ENCODE measurements at regions of chr12 and their contacts with region 1.

Region 1: GRCh38 chr12:47715393-47715876 is 9.6 kb upstream of the RPAP3 start:
- DNase-seq: peak; percentile 24
- H3K4me3 ChIP-seq: no peak overlapping the region
- CTCF ChIP-seq: peak; percentile 61

Region 2: GRCh38 chr12:47742253-47742825 is 26.9 kb after region 1 on chr12:
- CTCF ChIA-PET with region 1: interaction called, 247 read pairs
- POLR2A ChIA-PET with region 1: no interaction called
- DNase-seq: no peak
- H3K4me3 ChIP-seq: no peak overlapping the region
- CTCF ChIP-seq: peak; percentile 97

Region 3: GRCh38 chr12:47779301-47779942 is 64.0 kb after region 1 on chr12:
- CTCF ChIA-PET with region 1: interaction called, 1,419 read pairs
- POLR2A ChIA-PET with region 1: no interaction called
- DNase-seq: peak; percentile 34
- H3K4me3 ChIP-seq: no peak overlapping the region
- CTCF ChIP-seq: peak; percentile 86

Region 4: DNA sequence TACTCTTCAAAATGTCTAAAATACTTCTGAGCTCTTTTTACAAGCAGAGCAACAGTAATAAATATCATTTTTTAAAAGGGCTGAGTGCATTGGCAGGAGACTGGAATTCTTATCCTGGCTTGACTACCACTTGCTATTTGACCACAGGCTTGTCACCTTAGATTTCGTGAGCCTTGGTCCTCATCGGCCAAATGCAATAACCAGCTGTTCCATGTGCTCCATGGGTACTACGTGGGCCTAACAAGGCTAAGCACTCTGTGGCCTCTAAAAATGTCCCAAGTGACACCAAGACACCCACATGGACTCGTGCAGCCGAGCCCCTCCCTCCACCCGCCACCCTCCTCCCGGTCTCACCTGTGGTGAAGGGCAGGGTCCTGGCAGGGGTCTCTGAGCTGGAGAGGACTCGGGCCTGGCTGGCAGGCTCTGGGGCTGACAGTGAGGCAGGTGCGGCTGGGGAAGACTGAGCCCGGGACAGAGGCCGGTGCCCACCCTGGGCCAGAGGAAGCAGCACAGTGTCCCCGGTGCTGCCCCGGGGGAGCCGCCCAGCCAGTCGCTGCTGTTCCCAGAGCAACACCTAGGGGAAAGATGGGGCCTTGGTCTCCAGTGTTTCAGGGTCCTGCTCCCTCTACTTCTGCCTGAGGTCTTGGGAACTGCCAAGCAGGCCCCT is 77.7 kb after region 1 on chr12:
- CTCF ChIA-PET with region 1: interaction called, 53 read pairs
- POLR2A ChIA-PET with region 1: no interaction called
- DNase-seq: no peak
- H3K4me3 ChIP-seq: no peak overlapping the region
- CTCF ChIP-seq: no peak

Region 5: DNA sequence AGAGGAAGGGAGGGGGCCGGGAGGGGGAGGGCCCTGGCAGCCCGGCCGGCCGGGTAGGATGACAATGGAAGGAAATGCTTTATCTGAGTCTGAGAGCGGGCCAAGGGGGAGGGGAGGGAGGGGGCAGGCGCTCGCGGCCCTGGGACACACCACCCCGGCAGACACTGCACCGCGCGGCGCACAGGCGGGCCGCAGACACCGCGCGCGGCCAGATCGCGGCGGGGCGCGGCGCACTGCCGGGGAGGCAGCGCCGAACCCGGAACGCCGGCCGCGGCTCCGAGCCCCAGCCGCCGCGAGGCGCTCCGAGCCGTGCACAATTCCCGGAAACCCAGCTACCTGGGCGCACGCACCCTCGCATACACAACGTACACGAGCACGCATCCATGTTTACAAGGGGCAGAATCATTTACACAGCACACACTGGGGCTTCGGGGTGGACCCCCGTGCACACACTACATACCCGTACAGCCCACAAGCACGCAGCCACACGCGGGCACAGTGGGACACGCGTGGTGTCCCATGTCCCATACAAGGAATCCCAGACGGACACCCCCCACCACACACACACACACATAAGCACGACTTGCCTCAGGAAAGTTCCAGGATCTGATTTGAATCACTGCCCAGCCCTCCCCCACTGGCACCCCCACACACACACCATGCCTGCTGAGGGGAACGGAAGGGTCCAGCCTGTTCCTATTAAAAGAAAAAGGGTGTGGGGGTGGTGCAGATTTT is 104.6 kb after region 1 on chr12 and contains the start of gene HDAC7:
- CTCF ChIA-PET with region 1: interaction called, 12 read pairs
- POLR2A ChIA-PET with region 1: no interaction called
- DNase-seq: no peak
- H3K4me3 ChIP-seq: peak within 1 kb of the TSS; percentile 84
- CTCF ChIP-seq: no peak